ENCODE measurements at regions of chr2 and their contacts with region 1.

Region 1: GRCh38 chr2:158903711-158904443 is 64.6 kb upstream of the TANC1 start:
- DNase-seq: no peak

Region 2: GRCh38 chr2:158968396-158969161 is 64.7 kb after region 1 on chr2 and contains the start of gene TANC1:
- intact Hi-C with region 1: loop called (anchors 5 kb)
- DNase-seq: peak; percentile 83 to 98 (median 91)

Region 3: GRCh38 chr2:159118115-159118858 is 214.4 kb after region 1 on chr2:
- intact Hi-C with region 1: loop called (anchors 1 kb)
- DNase-seq: peak; percentile 75 to 98 (median 94)

Region 4: DNA sequence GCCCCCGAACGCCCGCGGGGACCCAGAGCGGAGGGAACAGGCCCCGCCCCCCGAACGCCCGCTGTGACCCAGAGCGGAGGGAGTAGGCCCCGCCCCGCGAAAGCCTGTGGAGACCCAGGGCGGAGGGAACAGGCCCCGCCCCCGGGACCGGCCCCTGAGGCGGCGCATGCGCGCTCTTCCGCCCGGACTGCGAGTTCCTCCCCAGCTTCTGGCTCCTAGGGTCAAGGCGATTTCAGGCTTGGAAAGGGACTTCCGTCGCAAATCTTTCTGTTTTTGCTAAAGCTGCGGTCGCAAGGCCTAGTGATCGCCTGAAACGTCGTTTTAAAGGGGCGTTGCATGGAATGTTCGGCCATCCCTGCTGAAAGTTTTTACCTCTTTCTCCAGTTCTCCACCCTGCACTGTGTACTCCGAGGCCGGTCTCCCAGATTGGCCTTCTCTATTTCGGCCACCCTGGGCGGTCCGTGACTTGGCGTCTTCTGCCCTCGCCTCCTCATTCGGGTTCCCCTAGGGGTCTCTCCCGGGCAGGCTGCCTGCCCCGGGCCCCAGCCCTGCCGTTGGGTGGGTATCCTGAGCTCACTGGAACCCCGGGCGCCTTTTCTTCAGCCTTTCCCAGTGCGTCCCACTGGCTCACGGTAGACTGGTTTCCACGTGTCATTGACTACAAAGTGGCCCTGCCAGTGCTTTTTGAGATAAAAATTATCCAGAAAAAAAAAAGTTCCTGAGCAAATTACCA is 383.0 kb after region 1 on chr2:
- intact Hi-C with region 1: loop called (anchors 5 kb)
- DNase-seq: peak; percentile 91 to 100 (median 98)

Region 5: GRCh38 chr2:159968279-159968900 is 1064.5 kb after region 1 on chr2:
- intact Hi-C with region 1: loop called (anchors 5 kb)
- DNase-seq: peak in 3 of 10 donors; percentile 14 to 28 (median 16)

Measured in posterior cingulate gyrus (tissue), 11 donors.